Left cardiac atrium (tissue), 4 donors: ENCODE measurements at regions of chr14 and their contacts with region 1.

Region 1: GRCh38 chr14:90758028-90758889 is 58.0 kb downstream of the TTC7B start:
- DNase-seq: peak; percentile 94
- ATAC-seq: peak; percentile 93

Region 2: GRCh38 chr14:90301668-90302090 is 456.6 kb before region 1 on chr14:
- intact Hi-C with region 1: loop called in 1 of 2 experiments (anchors 5 kb)
- DNase-seq: no peak
- ATAC-seq: peak; percentile 71 to 83

Region 3: GRCh38 chr14:90697577-90698206 is 60.6 kb before region 1 on chr14:
- intact Hi-C with region 1: no loop called
- DNase-seq: peak; percentile 84
- ATAC-seq: peak; percentile 93

Region 4: DNA sequence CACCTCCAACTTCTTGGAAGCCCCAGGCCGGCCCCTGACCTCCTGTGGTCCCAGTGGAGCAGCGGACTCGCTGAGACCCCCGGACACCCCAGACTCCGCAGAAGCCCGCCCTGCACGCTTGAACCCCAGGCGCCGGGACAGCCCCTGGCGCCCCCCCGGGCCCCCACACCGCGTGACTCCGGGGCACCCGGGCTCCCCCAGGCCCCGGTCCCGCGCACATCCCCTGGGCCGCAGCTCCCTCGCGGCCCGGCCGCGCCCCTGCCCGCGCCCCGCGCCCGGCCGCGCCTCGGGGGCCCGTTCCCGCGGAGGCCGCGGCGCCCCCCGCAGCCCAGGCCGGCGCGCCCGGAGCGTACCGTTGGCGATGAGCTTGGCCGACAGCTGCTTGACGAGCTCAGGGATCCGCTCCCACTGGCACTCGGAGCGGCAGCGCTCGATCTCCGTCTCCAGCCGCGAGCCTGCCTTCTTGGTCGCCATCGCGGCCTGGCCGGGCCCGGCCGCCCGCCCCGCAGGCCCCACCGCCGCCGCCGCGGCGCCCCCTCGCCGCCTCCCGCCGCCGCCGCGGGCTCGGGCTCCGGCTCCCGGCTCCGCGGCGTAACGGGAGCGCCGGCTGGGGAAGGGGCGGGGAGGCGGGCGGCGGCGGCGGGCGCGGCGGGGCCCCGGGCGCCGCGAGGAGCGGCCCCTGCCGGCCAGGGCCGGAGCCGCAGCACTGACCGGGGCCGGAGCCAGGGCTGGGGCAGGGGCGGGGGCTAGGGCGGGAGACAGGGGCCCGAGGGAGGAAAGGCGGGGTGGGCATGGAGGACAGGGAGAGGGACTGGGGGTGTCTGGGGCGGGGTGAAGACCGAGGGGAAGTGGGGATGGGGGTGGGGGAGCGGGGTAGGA is 57.8 kb after region 1 on chr14 and contains the start of gene TTC7B:
- intact Hi-C with region 1: loop called in 1 of 2 experiments (anchors 5 kb)
- DNase-seq: peak; percentile 61
- ATAC-seq: peak; percentile 78 to 88
- total RNA-seq, gene TTC7B: 61.9 to 76.5 TPM